Stomach (tissue), 19 donors: ENCODE measurements at regions of chr20 and their contacts with region 1.

Region 1: GRCh38 chr20:37990571-37991151 is 42.6 kb downstream of the TTI1 start:
- DNase-seq: peak; percentile 71 to 75
- H3K4me3 ChIP-seq: no peak overlapping the region
- H3K27ac ChIP-seq: peak overlapping the region in 4 of 5 donors; percentile 55 to 79 (median 62)
- H3K4me1 ChIP-seq: peaks cover 21 to 78% (median 65%) of the 10 kb centered on the region in 4 donors
- H3K27me3 ChIP-seq: no peaks in the 10 kb centered on the region
- CTCF ChIP-seq: no peak
- EP300 ChIP-seq: no peak
- POLR2A ChIP-seq: no peak

Region 2: DNA sequence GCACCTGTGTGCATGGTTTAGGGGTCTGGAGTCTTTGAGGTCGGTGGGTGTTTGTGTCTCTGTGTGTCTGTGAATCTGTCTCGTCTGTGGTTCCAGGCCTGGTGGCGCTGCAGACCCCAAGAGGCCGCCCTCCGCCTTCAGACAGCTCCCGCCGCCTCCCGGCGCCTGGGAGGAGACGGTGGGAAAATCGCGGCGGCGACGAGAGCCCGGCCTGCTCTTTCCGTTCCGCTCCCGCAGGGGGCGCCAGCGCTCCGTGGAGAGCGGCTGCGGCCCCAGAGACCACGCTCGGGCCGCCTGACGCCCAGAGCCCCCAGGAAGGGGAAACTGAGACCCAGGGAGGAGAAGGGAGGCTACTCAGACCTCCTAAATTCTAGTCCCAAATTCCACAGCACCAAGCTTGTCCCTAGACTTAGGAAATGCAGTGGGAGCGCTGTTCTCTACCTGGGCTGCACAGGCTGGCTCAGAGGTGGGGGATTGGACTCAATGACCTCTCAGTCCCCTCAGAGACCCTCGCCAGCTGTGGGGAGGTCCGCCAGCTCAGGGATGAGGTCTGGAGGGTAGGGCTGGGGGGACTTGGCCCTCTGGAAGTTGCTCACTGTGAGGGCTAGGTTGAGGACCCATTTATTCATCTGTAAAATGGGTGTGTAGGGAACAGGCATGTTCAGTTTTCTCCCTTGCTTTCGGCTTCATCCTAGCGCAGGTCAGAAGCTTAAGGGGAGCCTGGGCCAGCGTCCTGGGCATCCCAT is 426.1 kb before region 1 on chr20:
- intact Hi-C with region 1: loop called (anchors 10 kb)
- DNase-seq: peak; percentile 60 to 80
- H3K4me3 ChIP-seq: peak overlapping the region in 1 of 4 donors; percentile 3
- H3K27ac ChIP-seq: no peak overlapping the region
- H3K4me1 ChIP-seq: peaks cover 0 to 17% (median 13%) of the 10 kb centered on the region in 4 donors
- H3K27me3 ChIP-seq: peaks cover 0 to 88% (median 61%) of the 10 kb centered on the region in 3 donors
- CTCF ChIP-seq: peak in 5 of 7 experiments; percentile 51 to 84 (median 78)
- EP300 ChIP-seq: no peak
- POLR2A ChIP-seq: no peak

Region 3: GRCh38 chr20:37668166-37668565 is 322.5 kb before region 1 on chr20:
- intact Hi-C with region 1: no loop called
- DNase-seq: no peak
- H3K4me3 ChIP-seq: no peak overlapping the region
- H3K27ac ChIP-seq: no peak overlapping the region
- H3K4me1 ChIP-seq: peaks cover 0 to 13% (median 5%) of the 10 kb centered on the region in 4 donors
- H3K27me3 ChIP-seq: peaks cover 0 to 39% (median 4%) of the 10 kb centered on the region in 3 donors
- CTCF ChIP-seq: no peak
- EP300 ChIP-seq: no peak
- POLR2A ChIP-seq: no peak

Region 4: GRCh38 chr20:37864298-37864697 is 126.4 kb before region 1 on chr20:
- intact Hi-C with region 1: no loop called
- DNase-seq: no peak
- H3K4me3 ChIP-seq: no peak overlapping the region
- H3K27ac ChIP-seq: no peak overlapping the region
- H3K4me1 ChIP-seq: peaks cover 0 to 40% (median 4%) of the 10 kb centered on the region in 4 donors
- H3K27me3 ChIP-seq: no peaks in the 10 kb centered on the region
- CTCF ChIP-seq: no peak
- EP300 ChIP-seq: no peak
- POLR2A ChIP-seq: no peak

Region 5: DNA sequence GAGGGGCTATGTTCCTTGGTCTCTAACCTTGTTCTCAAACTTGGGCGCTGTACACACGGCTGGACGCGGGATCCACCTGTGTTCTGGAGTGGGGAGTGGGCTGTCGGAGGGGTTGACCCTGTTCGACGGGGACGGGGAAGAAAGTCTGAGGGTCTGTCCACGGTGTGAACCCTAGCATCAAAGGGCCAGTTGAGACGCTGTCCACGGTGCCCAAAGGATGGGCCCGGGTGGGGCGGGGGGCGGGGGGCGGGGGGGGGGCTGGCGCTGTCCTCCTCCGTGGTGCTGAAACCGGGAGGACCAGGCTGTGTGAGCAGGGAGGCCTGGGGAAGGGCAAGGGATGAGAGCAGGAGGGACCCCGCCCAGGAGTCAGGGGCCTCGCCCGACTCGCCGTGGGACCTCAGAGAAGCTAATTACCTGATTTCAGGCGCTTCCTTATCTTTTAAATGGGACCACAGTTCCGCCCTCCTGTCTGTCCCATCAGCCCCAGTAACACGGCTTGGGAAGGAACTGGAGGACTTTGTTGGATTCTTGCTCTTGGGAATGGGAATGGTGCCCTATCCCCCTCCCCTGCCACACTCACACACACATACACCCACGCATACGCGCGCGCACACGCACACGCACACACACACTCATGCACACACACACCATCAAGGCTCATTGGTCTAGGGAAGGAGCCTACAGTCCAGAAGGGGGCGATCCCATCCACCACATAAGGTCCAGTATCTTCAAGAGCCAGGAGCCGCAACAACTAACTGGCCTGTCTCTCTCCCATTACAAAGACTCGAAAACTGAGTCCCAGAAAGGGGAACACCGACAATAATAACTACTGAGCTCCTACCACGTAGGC is 88.8 kb before region 1 on chr20:
- intact Hi-C with region 1: loop called (anchors 10 kb)
- DNase-seq: peak; percentile 53 to 87
- H3K4me3 ChIP-seq: peak overlapping the region; percentile 41 to 53 (median 46)
- H3K27ac ChIP-seq: no peak overlapping the region
- H3K4me1 ChIP-seq: peaks cover 11 to 22% (median 16%) of the 10 kb centered on the region in 4 donors
- H3K27me3 ChIP-seq: peaks cover 0 to 85% (median 47%) of the 10 kb centered on the region in 3 donors
- CTCF ChIP-seq: peak in 4 of 7 experiments; percentile 6 to 57 (median 31)
- EP300 ChIP-seq: no peak
- POLR2A ChIP-seq: no peak

Region 6: GRCh38 chr20:38579219-38579910 is 588.7 kb after region 1 on chr20:
- intact Hi-C with region 1: no loop called
- DNase-seq: no peak
- H3K4me3 ChIP-seq: no peak overlapping the region
- H3K27ac ChIP-seq: no peak overlapping the region
- H3K4me1 ChIP-seq: no peaks in the 10 kb centered on the region
- H3K27me3 ChIP-seq: peaks cover 0 to 11% (median 0%) of the 10 kb centered on the region in 3 donors
- CTCF ChIP-seq: no peak
- EP300 ChIP-seq: no peak
- POLR2A ChIP-seq: no peak

Region 7: GRCh38 chr20:38674092-38674764 is 683.6 kb after region 1 on chr20:
- intact Hi-C with region 1: no loop called
- DNase-seq: peak in 1 of 2 donors; percentile 84
- H3K4me3 ChIP-seq: peak overlapping the region; percentile 36 to 54 (median 49)
- H3K27ac ChIP-seq: no peak overlapping the region
- H3K4me1 ChIP-seq: peaks cover 5 to 17% (median 16%) of the 10 kb centered on the region in 4 donors
- H3K27me3 ChIP-seq: peaks cover 11 to 70% (median 37%) of the 10 kb centered on the region in 3 donors
- CTCF ChIP-seq: no peak
- EP300 ChIP-seq: no peak
- POLR2A ChIP-seq: no peak